Colonic mucosa (tissue), 4 donors: ENCODE measurements at regions of chr7 and their contacts with region 1.

Region 1: GRCh38 chr7:132580717-132581285 is 4.5 kb upstream of the PLXNA4 start:
- DNase-seq: peak; percentile 72
- H3K4me3 ChIP-seq: no peak overlapping the region
- H3K27ac ChIP-seq: no peak overlapping the region
- H3K4me1 ChIP-seq: no peaks in the 10 kb centered on the region
- H3K27me3 ChIP-seq: peaks cover 19% of the 10 kb centered on the region
- CTCF ChIP-seq: peak; percentile 77

Region 2: GRCh38 chr7:131688738-131689661 is 891.8 kb before region 1 on chr7:
- intact Hi-C with region 1: loop called (anchors 5 kb)
- DNase-seq: peak; percentile 65
- H3K4me3 ChIP-seq: no peak overlapping the region
- H3K27ac ChIP-seq: no peak overlapping the region
- H3K4me1 ChIP-seq: no peaks in the 10 kb centered on the region
- H3K27me3 ChIP-seq: no peaks in the 10 kb centered on the region
- CTCF ChIP-seq: peak; percentile 87

Region 3: DNA sequence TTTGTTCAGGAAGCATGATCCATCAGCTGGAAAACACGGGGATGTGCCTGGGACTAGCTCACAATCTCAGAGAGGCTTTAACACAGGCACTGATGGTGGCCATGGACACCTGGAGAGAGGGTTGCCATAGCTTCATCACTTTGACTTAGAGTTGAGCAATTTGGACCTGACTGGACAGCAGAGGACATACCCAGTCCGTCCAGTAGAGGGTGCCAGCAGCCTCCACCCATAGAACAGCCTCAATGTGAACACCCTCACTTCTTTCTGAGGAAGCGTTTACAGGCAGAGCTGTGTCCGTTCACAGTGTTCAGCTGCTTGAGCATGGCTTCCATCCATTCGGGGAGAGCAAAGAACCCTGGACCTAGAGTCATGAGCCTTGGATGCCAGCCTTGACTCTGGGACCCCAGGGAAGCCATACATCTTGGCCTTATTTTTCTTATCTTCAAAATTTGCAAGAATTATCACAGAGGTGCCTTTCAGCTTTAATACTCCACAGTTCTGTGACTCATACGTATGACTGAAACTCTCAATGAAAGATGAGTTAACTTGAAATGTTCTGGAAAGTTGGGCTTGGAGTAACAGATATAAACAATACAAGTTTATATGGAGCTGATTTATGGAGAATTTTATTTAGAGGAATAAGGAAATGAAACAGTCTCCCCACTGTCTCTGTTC is 721.5 kb before region 1 on chr7:
- intact Hi-C with region 1: loop called (anchors 5 kb)
- DNase-seq: peak; percentile 61
- H3K4me3 ChIP-seq: no peak overlapping the region
- H3K27ac ChIP-seq: no peak overlapping the region
- H3K4me1 ChIP-seq: no peaks in the 10 kb centered on the region
- H3K27me3 ChIP-seq: no peaks in the 10 kb centered on the region
- CTCF ChIP-seq: peak; percentile 90

Region 4: DNA sequence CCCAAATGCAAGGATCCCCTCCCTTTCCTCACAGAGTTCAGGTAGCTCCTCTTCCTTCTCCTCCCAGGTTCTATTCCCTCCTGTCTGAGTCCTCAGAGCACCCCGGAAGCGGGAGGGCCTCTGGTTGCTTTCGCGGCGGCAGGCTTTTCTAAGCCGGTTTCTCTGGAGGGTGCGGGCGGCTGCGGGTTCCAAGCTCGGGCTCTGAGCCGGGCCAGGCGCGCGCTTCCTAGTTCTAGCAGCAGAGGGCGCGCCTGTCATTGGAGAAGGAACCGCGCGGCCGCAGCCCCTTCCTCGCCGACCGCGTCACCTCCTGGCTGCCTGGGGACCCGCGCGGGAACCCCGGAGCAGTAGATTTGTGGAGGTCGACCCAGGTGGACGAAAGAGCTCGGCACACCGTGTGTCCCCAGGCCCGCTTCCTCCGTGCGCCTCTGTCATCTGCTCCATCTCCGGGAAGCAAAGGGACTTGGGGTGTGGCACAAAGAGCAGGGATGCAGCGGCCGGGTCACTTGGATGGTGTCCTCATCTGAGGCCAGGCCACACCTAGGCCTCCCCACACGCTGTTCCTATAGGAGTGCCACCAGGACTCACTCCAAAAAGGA is 635.4 kb before region 1 on chr7:
- intact Hi-C with region 1: loop called (anchors 5 kb)
- DNase-seq: peak; percentile 49
- H3K4me3 ChIP-seq: peak overlapping the region; percentile 15
- H3K27ac ChIP-seq: no peak overlapping the region
- H3K4me1 ChIP-seq: peaks cover 7% of the 10 kb centered on the region
- H3K27me3 ChIP-seq: no peaks in the 10 kb centered on the region
- CTCF ChIP-seq: peak; percentile 89

Region 5: GRCh38 chr7:132318352-132319318 is 262.2 kb before region 1 on chr7:
- intact Hi-C with region 1: loop called (anchors 2 kb)
- DNase-seq: peak; percentile 83
- H3K4me3 ChIP-seq: peak overlapping the region; percentile 3
- H3K27ac ChIP-seq: peak overlapping the region; percentile 9
- H3K4me1 ChIP-seq: peaks cover 9% of the 10 kb centered on the region
- H3K27me3 ChIP-seq: no peaks in the 10 kb centered on the region
- CTCF ChIP-seq: peak; percentile 87

Region 6: DNA sequence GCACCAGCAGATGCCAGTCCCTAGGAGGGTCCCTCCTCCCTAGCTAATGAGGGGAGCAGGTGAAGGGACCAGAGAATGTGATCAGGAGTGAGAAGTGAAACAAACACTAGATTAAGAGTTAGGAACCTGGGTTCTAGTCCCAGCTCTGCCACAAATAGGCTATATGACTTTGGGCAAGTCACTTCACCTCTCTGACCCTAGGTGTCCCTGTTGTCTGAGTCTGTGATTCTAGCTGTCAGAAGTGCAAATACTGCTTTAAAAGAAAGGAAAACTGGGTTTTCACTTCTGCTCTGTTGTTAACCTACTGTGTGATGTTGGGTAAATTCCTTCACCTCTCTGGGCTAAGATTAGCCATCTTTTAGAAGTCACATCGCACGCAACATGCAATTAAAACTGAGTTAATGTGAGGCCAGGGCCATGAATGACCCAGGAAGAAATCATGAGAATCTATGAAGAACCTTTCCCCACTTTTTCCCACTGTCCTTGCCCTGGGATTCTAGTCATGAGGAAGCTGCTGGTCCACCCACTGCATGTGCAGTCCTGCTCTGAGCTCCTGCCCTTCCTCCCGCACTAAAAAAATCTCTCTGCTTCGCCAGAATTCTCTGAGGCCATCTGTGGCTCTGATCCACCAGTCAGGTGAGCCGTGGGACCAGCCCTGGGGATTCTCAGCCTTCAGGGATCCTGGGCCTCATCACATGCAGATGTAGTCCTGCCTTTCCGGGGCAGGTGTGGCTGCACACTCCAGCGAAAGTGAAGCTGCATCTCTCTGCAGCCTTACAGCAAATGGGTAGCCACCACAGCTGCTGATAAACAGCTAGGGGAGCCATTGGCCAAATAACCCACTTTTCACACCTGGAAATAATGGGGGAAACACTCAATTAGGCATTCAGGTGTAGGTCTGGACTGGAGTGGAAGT is 186.3 kb before region 1 on chr7:
- intact Hi-C with region 1: loop called (anchors 5 kb)
- DNase-seq: no peak
- H3K4me3 ChIP-seq: no peak overlapping the region
- H3K27ac ChIP-seq: no peak overlapping the region
- H3K4me1 ChIP-seq: no peaks in the 10 kb centered on the region
- H3K27me3 ChIP-seq: no peaks in the 10 kb centered on the region
- CTCF ChIP-seq: peak; percentile 18

Region 7: GRCh38 chr7:132603220-132603833 is 22.5 kb after region 1 on chr7:
- intact Hi-C with region 1: no loop called
- DNase-seq: no peak
- H3K4me3 ChIP-seq: no peak overlapping the region
- H3K27ac ChIP-seq: no peak overlapping the region
- H3K4me1 ChIP-seq: no peaks in the 10 kb centered on the region
- H3K27me3 ChIP-seq: no peaks in the 10 kb centered on the region
- CTCF ChIP-seq: no peak